ENCODE measurements at regions of chr1 and their contacts with region 1.

Region 1: DNA sequence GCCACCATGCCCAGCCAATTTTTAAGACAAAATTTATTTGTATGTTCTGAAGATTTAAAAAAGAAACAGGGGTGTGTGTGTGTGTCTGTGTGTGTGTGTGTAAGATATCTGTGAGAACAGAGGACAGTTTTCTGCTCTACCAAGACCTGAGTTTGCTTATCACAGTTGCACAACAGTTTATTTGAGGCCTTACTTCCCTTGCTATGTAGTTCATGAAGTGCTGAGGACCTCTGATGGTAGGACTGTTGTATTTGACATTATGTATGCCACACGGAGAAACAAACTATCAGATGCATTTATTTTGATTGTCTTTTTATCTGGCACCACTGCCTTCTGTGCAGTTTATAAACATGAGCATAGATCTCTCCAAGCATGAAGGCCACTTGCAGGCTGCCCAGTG is 355.2 kb downstream of the PBX1 start:
- DNase-seq: peak; percentile 38
- ATAC-seq: peak; percentile 64
- H3K4me3 ChIP-seq: no peak overlapping the region
- H3K27ac ChIP-seq: no peak overlapping the region
- H3K4me1 ChIP-seq: no peaks in the 10 kb centered on the region
- H3K27me3 ChIP-seq: peaks cover 96% of the 10 kb centered on the region
- CTCF ChIP-seq: 0 out of 2 replicates have a peak, but pooled peaks have one; percentile 28

Region 2: DNA sequence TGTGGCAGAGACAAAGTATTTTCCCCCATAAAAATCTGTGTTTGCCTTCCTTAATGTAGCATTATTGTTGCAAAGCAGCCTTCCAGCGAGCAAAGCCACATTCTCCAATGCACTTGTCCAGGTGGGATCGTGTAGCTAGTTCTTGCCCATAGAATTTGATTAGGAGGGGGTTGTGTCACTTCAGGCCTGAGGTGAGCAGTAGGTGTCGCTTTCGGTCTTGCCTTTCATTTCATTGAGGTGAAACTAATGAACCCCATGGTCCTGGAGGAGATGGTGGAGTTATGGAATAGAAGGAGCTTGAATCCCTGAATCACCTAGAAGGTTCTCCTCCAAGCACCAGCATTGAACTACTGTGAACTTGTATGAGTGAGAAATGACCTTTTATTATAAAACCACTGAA is 674.1 kb before region 1 on chr1:
- CTCF ChIA-PET with region 1: no interaction called
- POLR2A ChIA-PET with region 1: no interaction called
- intact Hi-C with region 1: loop called (anchors 5 kb)
- DNase-seq: peak; percentile 43
- ATAC-seq: no peak
- H3K4me3 ChIP-seq: no peak overlapping the region
- H3K27ac ChIP-seq: no peak overlapping the region
- H3K4me1 ChIP-seq: no peaks in the 10 kb centered on the region
- H3K27me3 ChIP-seq: peaks cover 13% of the 10 kb centered on the region
- CTCF ChIP-seq: peak; percentile 53

Region 3: GRCh38 chr1:164671323-164671965 is 242.8 kb before region 1 on chr1:
- CTCF ChIA-PET with region 1: no interaction called
- POLR2A ChIA-PET with region 1: no interaction called
- intact Hi-C with region 1: no loop called
- DNase-seq: no peak
- ATAC-seq: no peak
- H3K4me3 ChIP-seq: no peak overlapping the region
- H3K27ac ChIP-seq: no peak overlapping the region
- H3K4me1 ChIP-seq: peaks cover 14% of the 10 kb centered on the region
- H3K27me3 ChIP-seq: no peaks in the 10 kb centered on the region
- CTCF ChIP-seq: no peak

Region 4: GRCh38 chr1:164794310-164794709 is 119.9 kb before region 1 on chr1:
- CTCF ChIA-PET with region 1: no interaction called
- POLR2A ChIA-PET with region 1: no interaction called
- intact Hi-C with region 1: loop called (anchors 10 kb)
- DNase-seq: peak; percentile 90
- ATAC-seq: peak; percentile 100
- H3K4me3 ChIP-seq: no peak overlapping the region
- H3K27ac ChIP-seq: no peak overlapping the region
- H3K4me1 ChIP-seq: peaks cover 14% of the 10 kb centered on the region
- H3K27me3 ChIP-seq: no peaks in the 10 kb centered on the region
- CTCF ChIP-seq: no peak